Panc1 (cell line): ENCODE measurements at regions of chr3 and their contacts with region 1.

Region 1: GRCh38 chr3:154334973-154335420 is 10.7 kb upstream of the DHX36 start:
- DNase-seq: no peak
- ATAC-seq: peak; percentile 58; the same call in 1 of the 2 replicates
- H3K4me3 ChIP-seq: no peak overlapping the region
- H3K27ac ChIP-seq: no peak overlapping the region
- H3K4me1 ChIP-seq: no peaks in the 10 kb centered on the region
- H3K27me3 ChIP-seq: peaks cover 24% of the 10 kb centered on the region
- CTCF ChIP-seq: peak; percentile 69; the same call in 1 of the 2 replicates

Region 2: GRCh38 chr3:154745960-154746359 is 411.0 kb after region 1 on chr3:
- CTCF ChIA-PET with region 1: no interaction called
- POLR2A ChIA-PET with region 1: no interaction called
- in situ Hi-C with region 1: no loop called
- intact Hi-C with region 1: loop called (anchors 10 kb)
- DNase-seq: no peak
- ATAC-seq: no peak
- H3K4me3 ChIP-seq: no peak overlapping the region
- H3K27ac ChIP-seq: no peak overlapping the region
- H3K4me1 ChIP-seq: no peaks in the 10 kb centered on the region
- H3K27me3 ChIP-seq: no peaks in the 10 kb centered on the region
- CTCF ChIP-seq: no peak

Region 3: GRCh38 chr3:154898443-154898842 is 563.4 kb after region 1 on chr3:
- CTCF ChIA-PET with region 1: no interaction called
- POLR2A ChIA-PET with region 1: no interaction called
- in situ Hi-C with region 1: no loop called
- intact Hi-C with region 1: no loop called
- DNase-seq: no peak
- ATAC-seq: no peak
- H3K4me3 ChIP-seq: no peak overlapping the region
- H3K27ac ChIP-seq: no peak overlapping the region
- H3K4me1 ChIP-seq: no peaks in the 10 kb centered on the region
- H3K27me3 ChIP-seq: no peaks in the 10 kb centered on the region
- CTCF ChIP-seq: no peak

Region 4: DNA sequence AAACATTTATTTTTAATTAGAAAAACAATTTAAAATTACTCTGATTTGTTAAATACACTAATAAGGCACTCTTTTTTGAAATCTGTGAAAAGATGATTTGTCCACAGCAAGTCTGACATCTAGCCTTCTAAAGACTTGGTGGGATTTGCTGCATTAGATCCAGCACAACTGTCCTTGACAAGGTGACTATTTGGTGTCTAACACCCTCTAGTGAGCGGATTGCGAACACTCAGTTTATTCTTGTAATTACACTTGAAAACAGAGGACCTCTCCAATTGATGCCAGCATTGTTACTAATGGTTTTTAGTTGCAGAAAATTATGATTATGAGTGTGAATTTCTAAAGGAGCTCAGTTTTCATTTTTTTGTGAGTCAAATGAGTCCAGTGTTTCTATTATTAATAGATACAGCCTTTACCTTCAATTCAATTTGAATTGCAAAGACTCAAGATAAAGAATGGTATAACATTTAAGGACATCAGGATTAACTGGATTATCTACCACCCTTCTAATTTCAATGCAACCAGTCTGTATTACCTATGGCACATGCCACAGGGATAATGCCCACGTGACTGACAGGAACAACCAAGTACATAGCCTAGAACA is 988.2 kb after region 1 on chr3:
- CTCF ChIA-PET with region 1: no interaction called
- POLR2A ChIA-PET with region 1: no interaction called
- in situ Hi-C with region 1: no loop called
- intact Hi-C with region 1: loop called (anchors 2 kb)
- DNase-seq: peak; percentile 59
- ATAC-seq: peak; percentile 93
- H3K4me3 ChIP-seq: no peak overlapping the region
- H3K27ac ChIP-seq: no peak overlapping the region
- H3K4me1 ChIP-seq: no peaks in the 10 kb centered on the region
- H3K27me3 ChIP-seq: no peaks in the 10 kb centered on the region
- CTCF ChIP-seq: peak; percentile 81